ENCODE measurements at regions of chr15 and their contacts with region 1.

Region 1: GRCh38 chr15:83747050-83747717 is 93.3 kb downstream of the ADAMTSL3 start:
- DNase-seq: no peak
- ATAC-seq: peak; percentile 87

Region 2: DNA sequence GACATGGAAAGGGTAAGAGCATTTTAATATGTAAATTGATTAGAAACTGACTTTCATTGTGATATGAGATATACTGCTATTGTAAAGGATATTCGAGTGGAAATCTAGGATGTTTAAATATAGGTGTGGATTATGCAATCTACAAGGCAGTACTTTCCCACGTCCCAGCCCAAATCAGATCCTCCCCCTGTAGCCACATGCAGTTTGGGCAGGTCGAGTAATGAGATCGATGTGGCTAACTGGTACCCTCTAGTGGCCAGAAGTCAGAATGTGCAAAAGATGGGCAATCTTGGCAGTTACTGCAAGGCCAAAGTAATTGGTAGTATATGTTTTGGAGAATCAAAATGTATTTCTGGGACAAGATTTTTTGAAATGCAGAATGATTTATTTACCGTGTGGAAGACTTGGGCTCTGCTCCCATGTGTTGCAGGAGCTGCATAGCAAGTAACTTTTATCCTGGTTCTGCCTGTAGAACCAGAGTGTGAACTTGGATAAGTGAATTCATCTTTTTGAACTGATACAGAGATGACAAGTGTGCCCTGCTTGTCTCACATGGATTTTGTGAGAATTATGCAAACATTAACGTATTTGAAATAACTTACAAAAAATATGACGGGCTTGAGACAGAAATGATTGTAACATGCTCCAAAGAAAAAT is 187.7 kb before region 1 on chr15:
- intact Hi-C with region 1: loop called in 1 of 2 experiments (anchors 10 kb)
- DNase-seq: peak; percentile 48
- ATAC-seq: peak; percentile 38 to 81

Region 3: DNA sequence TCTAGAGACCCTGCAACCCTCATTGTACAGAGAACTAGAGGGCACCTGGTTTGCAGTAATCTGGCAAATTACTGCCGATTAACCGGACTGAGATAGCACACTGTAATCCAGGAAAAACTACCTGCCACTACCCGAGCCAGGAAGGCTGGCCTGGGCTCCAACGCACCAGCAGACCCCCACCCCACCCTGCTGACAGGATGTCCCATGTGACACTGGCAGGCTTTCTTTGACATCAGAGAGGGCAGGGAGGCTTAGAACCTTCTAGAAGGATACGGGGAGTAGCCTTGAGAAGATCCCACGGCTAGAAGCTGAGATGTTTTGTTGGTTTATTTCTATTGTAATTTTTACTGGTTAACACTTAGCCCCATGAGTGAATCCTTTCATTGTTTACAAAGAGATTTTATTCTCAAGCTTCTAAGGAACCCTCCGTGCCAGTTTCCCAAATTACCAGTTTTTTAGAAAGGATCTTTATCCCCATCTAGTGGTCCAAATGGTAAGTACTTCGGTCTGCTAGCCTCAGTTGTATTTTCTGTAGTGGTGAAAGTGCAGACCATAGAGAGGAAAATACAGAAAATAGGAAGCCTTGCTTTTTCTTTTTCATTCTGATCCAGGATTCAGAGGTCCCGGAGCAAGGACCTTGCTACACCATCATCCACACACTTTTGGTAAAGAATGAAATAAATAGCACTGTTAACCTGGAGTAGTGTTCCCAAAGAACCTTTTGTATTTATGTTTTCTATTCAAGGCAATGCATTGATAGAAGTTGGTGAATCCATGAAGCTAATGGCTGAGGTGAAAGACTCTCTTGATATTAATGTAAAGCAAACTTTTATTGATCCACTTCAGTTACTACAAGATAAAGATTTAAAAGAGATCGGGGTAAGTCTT is 175.1 kb before region 1 on chr15:
- intact Hi-C with region 1: loop called (anchors 5 to 10 kb)
- DNase-seq: no peak
- ATAC-seq: no peak

Region 4: GRCh38 chr15:83657549-83657948 is 89.6 kb before region 1 on chr15:
- intact Hi-C with region 1: loop called in 1 of 2 experiments (anchors 5 kb)
- DNase-seq: no peak
- ATAC-seq: no peak

Region 5: GRCh38 chr15:83698294-83698693 is 48.9 kb before region 1 on chr15:
- intact Hi-C with region 1: loop called in 1 of 2 experiments (anchors 5 kb)
- DNase-seq: peak; percentile 75
- ATAC-seq: peak; percentile 60 to 86

Region 6: GRCh38 chr15:83810110-83810509 is 62.9 kb after region 1 on chr15:
- intact Hi-C with region 1: no loop called
- DNase-seq: no peak
- ATAC-seq: no peak

Region 7: DNA sequence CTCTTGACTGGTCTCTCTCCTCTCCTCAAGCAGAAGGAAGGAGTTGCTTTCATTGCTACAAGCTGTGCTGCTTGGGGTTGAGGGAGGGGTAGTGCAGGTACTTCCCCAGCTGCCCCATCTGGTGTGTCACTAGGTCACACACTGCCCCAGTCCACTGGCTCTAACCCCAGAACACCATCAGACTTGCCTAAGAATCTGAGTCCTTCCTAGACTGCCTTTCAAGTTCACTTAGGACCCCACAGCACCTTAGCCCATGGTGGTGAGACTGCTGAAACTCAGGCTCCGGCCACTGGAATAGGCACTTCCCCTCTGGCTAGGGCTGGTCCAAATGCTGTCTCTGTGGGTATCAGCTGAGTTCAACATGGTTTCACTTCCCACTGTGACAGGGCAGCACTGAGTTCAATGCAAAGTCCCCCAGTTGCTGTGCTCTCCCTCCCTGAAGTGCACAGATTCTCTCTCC is 208.7 kb after region 1 on chr15:
- intact Hi-C with region 1: no loop called
- DNase-seq: no peak
- ATAC-seq: no peak

Region 8: GRCh38 chr15:84035399-84035766 is 288.2 kb after region 1 on chr15:
- intact Hi-C with region 1: loop called in 1 of 2 experiments (anchors 10 kb)
- DNase-seq: no peak
- ATAC-seq: peak in 1 of 2 donors; percentile 76